Activated B cell treated with CpG ODN at 0.5 μM for 24 hours (primary cell): ENCODE measurements at regions of chr3 and their contacts with region 1.

Region 1: DNA sequence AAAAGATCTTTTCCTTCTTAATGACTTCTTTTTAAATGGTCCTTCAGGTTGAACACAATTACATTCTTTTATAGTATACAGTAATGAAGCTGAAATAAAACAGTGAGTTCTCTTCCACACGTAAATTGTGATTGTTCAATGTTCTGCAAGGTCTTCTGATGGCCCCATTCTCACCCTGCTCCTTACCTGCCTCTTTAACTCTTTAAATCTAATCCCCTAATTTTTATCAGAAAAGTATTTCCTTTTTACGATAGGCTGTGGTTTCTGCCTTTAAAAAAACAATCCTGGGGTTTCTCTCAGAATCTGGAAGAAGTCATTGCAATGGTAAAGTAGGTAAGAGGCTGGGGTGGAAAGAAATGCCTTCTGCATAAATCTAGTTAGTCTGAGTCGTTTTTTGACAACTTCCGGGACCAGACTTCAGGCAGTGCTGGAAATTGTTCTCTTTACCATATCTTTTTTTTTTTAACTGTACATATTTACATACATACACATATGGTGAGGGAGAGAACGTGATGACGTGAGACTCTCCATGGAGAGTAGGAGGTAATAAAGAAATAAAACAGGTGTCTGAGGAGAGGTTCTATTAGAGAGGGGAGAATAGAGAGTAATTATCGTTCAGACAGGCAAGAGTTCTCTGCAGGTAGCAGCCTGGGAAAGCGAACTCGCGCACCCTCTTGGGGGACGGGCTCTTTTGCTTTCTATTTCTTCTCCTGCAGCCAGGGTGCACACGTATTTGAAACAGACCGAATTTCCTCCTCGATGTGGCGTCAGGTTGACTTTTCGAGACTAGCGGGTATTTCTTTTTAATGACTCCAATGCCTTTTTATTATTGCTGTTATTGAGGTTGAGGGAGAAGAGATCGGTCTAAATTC is at the start of gene SIDT1:
- DNase-seq: peak; percentile 49
- ATAC-seq: peak; percentile 80
- H3K4me3 Mint-ChIP-seq: peak within 1 kb of the TSS; percentile 98
- H3K27ac Mint-ChIP-seq: peak within 1 kb of the TSS; percentile 100
- H3K4me1 Mint-ChIP-seq: peaks cover 47% of the 10 kb centered on the region
- H3K27me3 Mint-ChIP-seq: peaks cover 2% of the 10 kb centered on the region
- CTCF ChIP-seq: no peak
- total RNA-seq, gene SIDT1: 35.7 and 44.9 TPM in 2 replicates

Region 2: DNA sequence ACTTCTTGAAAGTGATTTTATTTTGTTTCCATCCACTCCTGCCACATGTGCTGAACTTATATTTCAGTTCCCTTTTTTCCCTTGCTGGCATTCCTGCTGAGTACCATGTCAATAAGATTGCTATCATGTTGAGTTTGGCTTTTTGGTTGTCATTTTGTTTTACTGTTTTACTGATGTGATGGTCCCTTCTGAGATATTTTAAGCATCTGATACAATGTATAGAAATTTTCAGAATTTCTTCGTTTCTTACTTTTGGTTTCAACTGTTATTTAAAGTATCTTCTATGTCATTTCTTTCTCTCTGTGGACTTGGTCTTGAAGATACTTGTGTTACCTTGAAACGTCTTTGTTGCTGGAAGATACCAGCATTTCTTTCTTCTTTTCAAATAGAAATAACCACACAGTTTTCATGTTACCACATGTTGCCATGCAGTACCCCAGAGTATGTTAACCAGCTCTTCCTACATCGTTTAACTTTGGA is 14.4 kb after region 1 on chr3:
- CTCF ChIA-PET with region 1: no interaction called
- POLR2A ChIA-PET with region 1: interaction called, 5 read pairs
- intact Hi-C with region 1: loop called (anchors 1 kb)
- DNase-seq: no peak
- ATAC-seq: peak; percentile 34
- H3K4me3 Mint-ChIP-seq: peak overlapping the region; percentile 16
- H3K27ac Mint-ChIP-seq: peak overlapping the region; percentile 5
- H3K4me1 Mint-ChIP-seq: peaks cover 29% of the 10 kb centered on the region
- H3K27me3 Mint-ChIP-seq: no peaks in the 10 kb centered on the region
- CTCF ChIP-seq: no peak

Region 3: GRCh38 chr3:113606539-113607218 is 74.6 kb after region 1 on chr3:
- CTCF ChIA-PET with region 1: no interaction called
- POLR2A ChIA-PET with region 1: no interaction called
- intact Hi-C with region 1: loop called (anchors 2 kb)
- DNase-seq: peak; percentile 26
- ATAC-seq: peak; percentile 96
- H3K4me3 Mint-ChIP-seq: peak overlapping the region; percentile 52
- H3K27ac Mint-ChIP-seq: peak overlapping the region; percentile 72
- H3K4me1 Mint-ChIP-seq: peaks cover 25% of the 10 kb centered on the region
- H3K27me3 Mint-ChIP-seq: no peaks in the 10 kb centered on the region
- CTCF ChIP-seq: no peak

Region 4: DNA sequence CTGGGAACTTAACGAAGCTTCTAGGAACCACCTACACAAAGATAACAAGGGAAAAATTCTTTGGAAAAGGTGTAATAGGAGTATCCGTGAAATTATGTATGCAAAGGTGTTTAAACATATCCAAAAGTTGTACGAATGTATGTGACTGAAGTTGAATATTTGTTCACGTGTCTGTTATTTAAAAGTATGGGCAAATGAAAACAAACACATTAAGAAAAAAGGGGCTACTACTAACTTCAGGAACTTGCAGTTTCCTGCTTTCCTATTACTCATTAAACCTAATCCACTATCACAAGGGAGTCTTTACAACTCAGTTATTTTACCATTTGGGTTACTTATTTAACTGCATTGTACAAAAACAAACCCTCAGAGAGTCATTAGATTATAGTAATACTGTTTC is 272.6 kb after region 1 on chr3:
- CTCF ChIA-PET with region 1: no interaction called
- POLR2A ChIA-PET with region 1: no interaction called
- intact Hi-C with region 1: no loop called
- DNase-seq: no peak
- ATAC-seq: no peak
- H3K4me3 Mint-ChIP-seq: no peak overlapping the region
- H3K27ac Mint-ChIP-seq: no peak overlapping the region
- H3K4me1 Mint-ChIP-seq: peaks cover 25% of the 10 kb centered on the region
- H3K27me3 Mint-ChIP-seq: no peaks in the 10 kb centered on the region
- CTCF ChIP-seq: no peak